ENCODE measurements at regions of chr5 and their contacts with region 1.

Region 1: GRCh38 chr5:56080375-56081052 is 85.8 kb upstream of the IL6ST start:
- DNase-seq: peak; percentile 46
- ATAC-seq: peak; percentile 78
- H3K4me3 Mint-ChIP-seq: no peak overlapping the region
- H3K27ac Mint-ChIP-seq: peak overlapping the region; percentile 11
- H3K4me1 Mint-ChIP-seq: peaks cover 34% of the 10 kb centered on the region
- H3K27me3 Mint-ChIP-seq: peaks cover 2% of the 10 kb centered on the region
- CTCF ChIP-seq: no peak

Region 2: DNA sequence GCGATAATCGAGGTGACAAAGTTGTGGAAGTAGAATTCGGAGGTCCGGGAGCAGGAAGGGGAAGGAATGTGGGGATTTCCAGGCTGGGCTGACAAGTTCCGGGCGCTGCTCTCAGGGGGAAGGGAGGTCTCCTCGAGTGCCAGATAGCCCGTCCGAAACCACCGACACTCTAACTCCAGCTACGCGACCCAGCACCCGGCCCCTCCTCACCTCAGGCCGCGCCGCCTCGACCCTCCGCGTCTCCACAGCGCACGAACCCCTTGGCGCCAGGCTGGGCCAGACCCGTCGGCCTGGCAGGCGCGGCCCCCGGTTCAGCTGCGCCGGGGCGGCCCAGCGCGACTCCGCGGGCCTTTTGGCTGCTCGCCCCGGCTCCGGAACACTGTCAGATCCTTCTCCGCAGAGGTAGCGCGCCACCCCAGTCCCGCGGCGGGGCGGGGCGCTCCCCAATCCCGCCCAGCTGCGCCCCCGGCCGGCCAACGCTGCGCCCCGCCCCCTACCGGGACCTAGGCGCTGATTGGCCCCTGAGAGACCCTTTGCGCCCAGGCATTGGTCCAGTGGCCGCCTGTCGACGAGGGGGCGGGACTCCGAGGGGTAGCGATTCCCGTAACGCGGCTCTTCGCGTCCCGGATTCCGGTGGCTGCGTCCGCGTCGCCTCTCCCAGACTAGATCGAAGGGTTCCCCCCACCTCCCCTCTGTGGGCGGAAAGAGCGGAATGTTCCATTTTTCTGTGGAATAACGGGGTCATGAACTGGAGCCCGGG is 85.8 kb before region 1 on chr5 and contains the start of gene IL6ST:
- CTCF ChIA-PET with region 1: no interaction called
- POLR2A ChIA-PET with region 1: no interaction called
- intact Hi-C with region 1: loop called (anchors 5 kb)
- DNase-seq: peak; percentile 96
- ATAC-seq: peak; percentile 95
- H3K4me3 Mint-ChIP-seq: peak within 1 kb of the TSS; percentile 97
- H3K27ac Mint-ChIP-seq: peak within 1 kb of the TSS; percentile 99
- H3K4me1 Mint-ChIP-seq: peaks cover 52% of the 10 kb centered on the region
- H3K27me3 Mint-ChIP-seq: no peaks in the 10 kb centered on the region
- CTCF ChIP-seq: no peak
- total RNA-seq, gene IL6ST: 31.4 to 35.3 TPM

Measured in activated CD8-positive, alpha-beta T cell treated with anti-CD3 and anti-CD28 coated beads for 36 hours (primary cell).